ENCODE measurements at regions of chrX and their contacts with region 1.

Region 1: DNA sequence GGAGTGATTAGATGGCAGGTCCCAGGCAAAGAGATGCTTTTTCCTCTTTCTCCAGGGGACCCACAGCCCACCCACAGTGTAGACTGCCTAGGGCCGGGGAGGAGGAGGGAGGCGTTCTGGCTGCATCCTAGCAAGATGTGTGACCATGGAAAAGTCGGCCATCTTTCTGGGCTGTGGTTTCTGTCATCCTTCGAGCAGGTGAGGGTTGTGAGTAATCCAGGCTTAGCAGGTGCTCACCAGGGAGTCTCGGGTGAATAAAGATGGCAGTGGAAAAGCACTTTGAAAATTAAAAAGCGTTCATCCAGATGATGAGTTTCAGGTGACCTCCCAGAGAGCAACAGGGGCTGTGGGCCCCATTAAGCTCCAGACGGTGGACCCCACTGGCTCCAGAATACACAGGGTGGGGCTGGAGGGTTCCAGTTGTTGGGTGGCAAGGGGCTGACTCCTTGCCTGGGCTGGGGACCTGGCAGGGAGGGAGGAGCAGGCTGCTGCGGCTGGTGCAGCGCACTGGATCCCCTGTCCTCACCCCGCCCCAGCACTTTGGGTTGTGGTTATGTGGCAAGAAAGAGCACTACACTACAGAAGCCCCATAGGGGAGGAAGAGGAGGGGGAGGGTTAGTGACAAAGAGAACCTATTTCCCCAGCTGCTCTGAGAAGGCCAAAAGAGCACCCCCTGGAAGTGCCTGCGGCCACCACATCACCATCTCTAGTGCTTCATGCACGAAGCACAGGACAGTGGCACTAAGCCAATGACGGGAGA is 23.7 kb downstream of the ELF4 start:
- DNase-seq: no peak
- H3K4me3 ChIP-seq: no peak overlapping the region
- H3K27ac ChIP-seq: no peak overlapping the region
- H3K4me1 ChIP-seq: peaks cover 0 to 4% of the 10 kb centered on the region in 2 donors
- H3K27me3 ChIP-seq: no peaks in the 10 kb centered on the region
- CTCF ChIP-seq: no peak
- POLR2A ChIP-seq: no peak

Region 2: DNA sequence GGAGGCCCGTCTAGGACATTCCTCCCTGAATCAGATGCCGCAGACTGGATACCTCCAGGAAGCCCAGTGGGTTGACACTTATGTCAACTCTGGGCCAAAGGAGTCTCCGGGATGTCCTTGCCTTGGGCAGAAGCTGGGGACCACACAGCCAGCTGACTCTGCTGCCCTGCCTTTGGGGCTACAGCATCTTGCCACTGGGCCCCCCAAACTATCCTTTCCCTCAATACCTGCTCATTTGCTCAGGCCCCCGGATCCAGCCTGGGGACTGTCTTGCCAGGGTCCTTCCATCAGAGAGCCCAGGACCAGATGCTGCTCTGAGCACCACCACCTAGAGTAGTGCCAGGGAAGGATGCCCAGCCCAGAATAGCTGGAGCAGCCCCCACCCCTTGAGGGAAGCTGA is 104.2 kb after region 1 on chrX:
- intact Hi-C with region 1: loop called (anchors 2 to 5 kb)
- DNase-seq: no peak
- H3K4me3 ChIP-seq: no peak overlapping the region
- H3K27ac ChIP-seq: no peak overlapping the region
- H3K4me1 ChIP-seq: no peaks in the 10 kb centered on the region
- H3K27me3 ChIP-seq: no peaks in the 10 kb centered on the region
- CTCF ChIP-seq: no peak
- POLR2A ChIP-seq: no peak

Region 3: DNA sequence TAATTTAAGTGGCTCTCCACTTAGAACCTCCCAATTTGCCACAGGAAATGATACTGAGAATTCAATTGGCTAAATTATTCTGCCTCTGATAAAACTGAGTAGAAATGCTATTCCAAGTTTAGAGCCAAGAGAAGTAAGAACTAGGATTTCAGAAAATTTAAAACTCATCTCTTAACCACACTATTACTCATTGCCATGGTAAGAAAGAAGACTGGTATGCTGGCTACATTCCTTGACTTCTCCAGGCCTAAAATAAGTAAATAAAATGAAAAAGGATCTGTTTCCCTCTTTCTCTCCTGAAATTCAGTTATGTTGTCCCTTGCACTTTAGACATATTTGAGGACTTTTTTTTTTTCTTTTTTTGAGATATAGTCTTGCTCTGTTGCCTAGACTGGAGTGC is 158.8 kb after region 1 on chrX:
- intact Hi-C with region 1: no loop called
- DNase-seq: no peak
- H3K4me3 ChIP-seq: no peak overlapping the region
- H3K27ac ChIP-seq: no peak overlapping the region
- H3K4me1 ChIP-seq: no peaks in the 10 kb centered on the region
- H3K27me3 ChIP-seq: no peaks in the 10 kb centered on the region
- CTCF ChIP-seq: no peak
- POLR2A ChIP-seq: no peak

Region 4: GRCh38 chrX:130339408-130340222 is 253.0 kb after region 1 on chrX and contains the start of gene SLC25A14:
- intact Hi-C with region 1: no loop called
- DNase-seq: peak; percentile 53 to 85 (median 73)
- H3K4me3 ChIP-seq: peak within 1 kb of the TSS; percentile 36 to 70 (median 56)
- H3K27ac ChIP-seq: peak within 1 kb of the TSS in 1 of 5 donors; percentile 44
- H3K4me1 ChIP-seq: peaks cover 0 to 3% of the 10 kb centered on the region in 2 donors
- H3K27me3 ChIP-seq: peaks cover 8% of the 10 kb centered on the region
- CTCF ChIP-seq: no peak
- POLR2A ChIP-seq: peak in 1 of 2 donors; percentile 31
- total RNA-seq, gene SLC25A14: 4.8 to 22.9 (median 11.1) TPM

Measured in adrenal gland (tissue), 19 donors.